ENCODE measurements at regions of chrX and their contacts with region 1.

Region 1: GRCh38 chrX:34300871-34301270 is 168.8 kb upstream of the FAM47A start:
- DNase-seq: peak; percentile 69
- H3K4me3 ChIP-seq: no peak overlapping the region
- H3K27ac ChIP-seq: no peak overlapping the region
- H3K4me1 ChIP-seq: no peaks in the 10 kb centered on the region
- H3K27me3 ChIP-seq: no peaks in the 10 kb centered on the region
- CTCF ChIP-seq: peak in 1 of 2 donors; percentile 44
- POLR2A ChIP-seq: no peak

Region 2: DNA sequence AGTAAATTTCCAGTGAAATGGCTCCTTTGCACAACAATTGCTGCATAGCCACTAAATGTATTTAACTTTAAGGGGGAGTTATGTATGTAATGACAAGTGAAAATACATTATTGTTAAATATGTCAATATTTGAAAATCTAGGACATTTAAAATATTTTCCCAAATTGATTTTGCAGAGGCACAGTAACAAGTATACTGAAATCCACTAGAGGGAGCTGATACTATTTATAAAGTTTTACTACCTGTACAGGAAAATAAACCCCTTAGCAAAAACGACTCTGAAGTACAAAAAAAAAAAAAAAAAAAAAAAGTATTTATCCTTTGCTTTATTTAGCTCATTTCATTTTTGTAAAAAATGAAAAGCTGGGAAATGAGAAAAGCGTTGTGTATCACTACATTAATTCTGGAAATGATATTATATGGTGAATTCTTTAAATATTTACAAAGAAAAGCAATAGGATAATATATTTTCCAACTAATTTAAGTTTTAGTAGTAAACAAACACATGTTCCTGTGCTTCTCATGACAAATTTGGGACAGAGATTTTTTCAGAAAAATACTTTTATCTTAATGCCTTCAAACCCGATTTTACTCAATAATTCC is 1817.2 kb before region 1 on chrX:
- CTCF ChIA-PET with region 1: no interaction called
- POLR2A ChIA-PET with region 1: no interaction called
- dilution Hi-C with region 1: no loop called
- intact Hi-C with region 1: loop called (anchors 5 kb)
- DNase-seq: no peak
- H3K4me3 ChIP-seq: no peak overlapping the region
- H3K27ac ChIP-seq: no peak overlapping the region
- H3K4me1 ChIP-seq: no peaks in the 10 kb centered on the region
- H3K27me3 ChIP-seq: no peaks in the 10 kb centered on the region
- CTCF ChIP-seq: no peak
- POLR2A ChIP-seq: no peak

Region 3: GRCh38 chrX:32530802-32531403 is 1770.0 kb before region 1 on chrX:
- CTCF ChIA-PET with region 1: interaction called, 4 read pairs
- POLR2A ChIA-PET with region 1: no interaction called
- dilution Hi-C with region 1: no loop called
- intact Hi-C with region 1: loop called (anchors 2 kb)
- DNase-seq: peak; percentile 50
- H3K4me3 ChIP-seq: no peak overlapping the region
- H3K27ac ChIP-seq: no peak overlapping the region
- H3K4me1 ChIP-seq: no peaks in the 10 kb centered on the region
- H3K27me3 ChIP-seq: no peaks in the 10 kb centered on the region
- CTCF ChIP-seq: peak; percentile 24 to 27
- POLR2A ChIP-seq: no peak

Region 4: GRCh38 chrX:33336783-33337182 is 964.1 kb before region 1 on chrX:
- CTCF ChIA-PET with region 1: no interaction called
- POLR2A ChIA-PET with region 1: no interaction called
- dilution Hi-C with region 1: no loop called
- intact Hi-C with region 1: loop called (anchors 5 kb)
- DNase-seq: peak; percentile 38
- H3K4me3 ChIP-seq: no peak overlapping the region
- H3K27ac ChIP-seq: no peak overlapping the region
- H3K4me1 ChIP-seq: no peaks in the 10 kb centered on the region
- H3K27me3 ChIP-seq: no peaks in the 10 kb centered on the region
- CTCF ChIP-seq: peak in 1 of 2 donors; percentile 36
- POLR2A ChIP-seq: no peak

Region 5: DNA sequence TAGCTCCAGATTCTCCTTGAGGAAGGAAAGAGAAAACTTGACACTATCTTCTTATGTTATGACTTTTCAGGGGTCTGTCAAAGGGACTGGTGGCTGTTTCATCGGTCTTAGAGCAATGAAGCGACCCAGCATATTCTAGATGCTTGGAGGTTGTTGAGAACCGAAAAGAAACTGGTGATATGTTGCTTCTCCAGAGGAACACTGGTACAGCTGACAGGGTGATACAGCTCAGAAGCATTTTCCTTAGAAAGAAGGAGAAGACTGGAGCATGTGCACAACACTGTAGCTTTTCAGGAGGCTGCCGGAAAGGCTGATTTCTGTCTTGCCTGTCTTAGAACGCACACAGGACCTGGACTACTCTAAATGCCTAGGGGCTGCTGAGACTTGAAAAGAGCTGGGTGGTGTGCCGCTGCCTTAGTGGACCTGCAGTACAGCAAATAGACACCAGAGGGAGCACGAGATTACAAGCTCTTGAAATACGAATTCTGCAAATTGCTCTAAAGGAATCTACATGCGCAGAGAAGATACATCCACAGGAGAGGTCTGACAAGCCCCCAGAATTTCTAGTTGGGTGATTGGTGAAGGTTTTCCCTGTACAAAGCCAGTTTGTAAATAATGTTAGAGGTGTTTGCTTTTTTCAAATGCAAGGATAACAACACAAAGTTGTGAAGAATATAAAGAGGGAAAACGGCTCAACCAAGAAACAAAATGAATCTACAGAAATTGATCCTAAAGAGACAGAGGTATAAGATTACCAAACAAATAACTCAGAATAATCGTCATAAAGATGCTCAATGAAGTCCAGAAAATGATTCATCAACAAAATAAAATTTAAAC is 866.4 kb before region 1 on chrX:
- CTCF ChIA-PET with region 1: interaction called, 29 read pairs
- POLR2A ChIA-PET with region 1: no interaction called
- dilution Hi-C with region 1: no loop called
- intact Hi-C with region 1: loop called (anchors 1 kb)
- DNase-seq: peak; percentile 59
- H3K4me3 ChIP-seq: no peak overlapping the region
- H3K27ac ChIP-seq: no peak overlapping the region
- H3K4me1 ChIP-seq: no peaks in the 10 kb centered on the region
- H3K27me3 ChIP-seq: no peaks in the 10 kb centered on the region
- CTCF ChIP-seq: peak; percentile 56 to 63
- POLR2A ChIP-seq: no peak

Region 6: GRCh38 chrX:33725535-33726210 is 575.2 kb before region 1 on chrX:
- CTCF ChIA-PET with region 1: no interaction called
- POLR2A ChIA-PET with region 1: no interaction called
- dilution Hi-C with region 1: no loop called
- intact Hi-C with region 1: loop called (anchors 2 kb)
- DNase-seq: peak; percentile 16
- H3K4me3 ChIP-seq: peak overlapping the region; percentile 4 to 59 (median 32)
- H3K27ac ChIP-seq: no peak overlapping the region
- H3K4me1 ChIP-seq: no peaks in the 10 kb centered on the region
- H3K27me3 ChIP-seq: no peaks in the 10 kb centered on the region
- CTCF ChIP-seq: no peak
- POLR2A ChIP-seq: no peak